ENCODE measurements at regions of chr2 and their contacts with region 1.

Region 1: GRCh38 chr2:174748948-174749347 is 15.3 kb downstream of the CHRNA1 start:
- DNase-seq: peak; percentile 87
- H3K4me3 Mint-ChIP-seq: no peak overlapping the region
- H3K27ac Mint-ChIP-seq: no peak overlapping the region
- H3K4me1 Mint-ChIP-seq: peaks cover 34% of the 10 kb centered on the region
- H3K27me3 Mint-ChIP-seq: no peaks in the 10 kb centered on the region

Region 2: GRCh38 chr2:174487108-174487819 is 261.7 kb before region 1 on chr2:
- CTCF ChIA-PET with region 1: no interaction called
- intact Hi-C with region 1: loop called (anchors 1 kb)
- DNase-seq: peak; percentile 100
- H3K4me3 Mint-ChIP-seq: peak overlapping the region; percentile 97
- H3K27ac Mint-ChIP-seq: peak overlapping the region; percentile 95
- H3K4me1 Mint-ChIP-seq: peaks cover 51% of the 10 kb centered on the region
- H3K27me3 Mint-ChIP-seq: no peaks in the 10 kb centered on the region

Region 3: GRCh38 chr2:174717273-174717672 is 31.7 kb before region 1 on chr2:
- CTCF ChIA-PET with region 1: interaction called, 3 read pairs
- intact Hi-C with region 1: loop called (anchors 2 kb)
- DNase-seq: peak; percentile 38
- H3K4me3 Mint-ChIP-seq: no peak overlapping the region
- H3K27ac Mint-ChIP-seq: peak overlapping the region; percentile 25
- H3K4me1 Mint-ChIP-seq: peaks cover 27% of the 10 kb centered on the region
- H3K27me3 Mint-ChIP-seq: no peaks in the 10 kb centered on the region

Region 4: GRCh38 chr2:174778085-174778981 is 29.4 kb after region 1 on chr2:
- CTCF ChIA-PET with region 1: interaction called, 15 read pairs
- intact Hi-C with region 1: loop called (anchors 1 kb)
- DNase-seq: peak; percentile 92
- H3K4me3 Mint-ChIP-seq: no peak overlapping the region
- H3K27ac Mint-ChIP-seq: peak overlapping the region; percentile 70
- H3K4me1 Mint-ChIP-seq: peaks cover 45% of the 10 kb centered on the region
- H3K27me3 Mint-ChIP-seq: no peaks in the 10 kb centered on the region

Region 5: GRCh38 chr2:174788291-174788929 is 39.5 kb after region 1 on chr2:
- CTCF ChIA-PET with region 1: no interaction called
- intact Hi-C with region 1: no loop called
- DNase-seq: peak; percentile 15
- H3K4me3 Mint-ChIP-seq: peak overlapping the region; percentile 29
- H3K27ac Mint-ChIP-seq: peak overlapping the region; percentile 69
- H3K4me1 Mint-ChIP-seq: peaks cover 17% of the 10 kb centered on the region
- H3K27me3 Mint-ChIP-seq: peaks cover 4% of the 10 kb centered on the region

Region 6: GRCh38 chr2:174901075-174901474 is 152.1 kb after region 1 on chr2:
- CTCF ChIA-PET with region 1: interaction called, 9 read pairs
- intact Hi-C with region 1: loop called (anchors 2 kb)
- DNase-seq: peak; percentile 48
- H3K4me3 Mint-ChIP-seq: peak overlapping the region; percentile 62
- H3K27ac Mint-ChIP-seq: peak overlapping the region; percentile 68
- H3K4me1 Mint-ChIP-seq: peaks cover 26% of the 10 kb centered on the region
- H3K27me3 Mint-ChIP-seq: no peaks in the 10 kb centered on the region

Region 7: DNA sequence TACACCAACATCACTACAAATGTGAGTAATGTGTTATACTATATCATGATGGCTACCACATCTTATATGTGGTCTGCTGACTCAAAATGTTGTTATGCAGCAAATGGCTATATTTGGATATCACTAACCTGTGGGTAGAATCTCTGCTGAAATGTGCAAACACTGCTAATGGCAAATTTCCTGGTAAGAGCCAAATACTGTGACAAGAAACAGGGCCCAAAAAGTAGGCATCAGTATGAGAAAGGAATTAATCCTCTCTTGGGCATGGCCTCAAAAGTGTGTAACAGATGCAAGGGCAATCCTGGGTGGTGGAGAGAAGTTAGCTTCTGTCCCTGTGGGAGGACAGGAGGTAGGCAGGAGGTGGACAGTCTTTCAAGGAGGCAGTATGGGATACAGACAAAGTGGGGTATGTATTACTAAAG is 405.7 kb after region 1 on chr2:
- CTCF ChIA-PET with region 1: no interaction called
- intact Hi-C with region 1: loop called (anchors 5 kb)
- DNase-seq: peak; percentile 8
- H3K4me3 Mint-ChIP-seq: no peak overlapping the region
- H3K27ac Mint-ChIP-seq: no peak overlapping the region
- H3K4me1 Mint-ChIP-seq: peaks cover 40% of the 10 kb centered on the region
- H3K27me3 Mint-ChIP-seq: no peaks in the 10 kb centered on the region